ENCODE measurements at regions of chr12 and their contacts with region 1.

Region 1: DNA sequence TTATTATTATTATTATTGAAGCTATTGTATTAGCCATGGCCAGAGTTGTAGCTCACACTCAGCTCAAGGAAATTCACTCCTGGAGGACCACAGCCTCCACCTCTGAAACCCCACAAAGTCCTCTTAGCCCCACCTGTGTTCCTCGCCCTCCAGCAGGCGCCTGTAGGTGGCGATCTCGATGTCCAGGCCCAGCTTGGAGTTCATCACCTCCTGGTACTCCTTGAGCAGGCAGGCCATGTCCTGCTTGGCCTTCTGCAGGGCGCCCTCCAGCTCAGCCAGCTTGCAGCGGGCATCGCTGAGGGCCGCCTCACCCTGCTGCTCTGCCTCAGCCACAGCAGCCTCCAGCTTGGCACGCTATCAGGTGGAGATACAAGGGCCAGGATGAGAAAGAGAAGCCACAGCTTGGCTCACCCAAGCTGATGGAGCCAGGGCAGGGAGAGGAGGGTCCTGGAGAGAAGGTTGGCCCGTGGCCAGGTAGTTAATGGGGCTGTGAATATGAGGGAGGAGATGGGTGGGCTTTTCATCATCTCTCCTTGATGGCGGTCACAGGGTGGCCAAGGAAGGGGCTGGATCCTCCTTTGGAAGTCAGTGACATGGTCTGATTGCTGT is 5.1 kb downstream of the KRT85 start:
- DNase-seq: no peak
- H3K4me3 ChIP-seq: no peak overlapping the region
- H3K4me1 ChIP-seq: no peaks in the 10 kb centered on the region
- H3K27me3 ChIP-seq: peaks cover 11% of the 10 kb centered on the region

Region 2: GRCh38 chr12:52879394-52880351 is 517.5 kb after region 1 on chr12:
- in situ Hi-C with region 1: loop called (anchors 10 kb)
- DNase-seq: peak; percentile 87 to 93
- H3K4me3 ChIP-seq: no peak overlapping the region
- H3K4me1 ChIP-seq: peaks cover 8% of the 10 kb centered on the region
- H3K27me3 ChIP-seq: no peaks in the 10 kb centered on the region

Measured in HAP-1 (cell line).